ENCODE measurements at regions of chr17 and their contacts with region 1.

Region 1: DNA sequence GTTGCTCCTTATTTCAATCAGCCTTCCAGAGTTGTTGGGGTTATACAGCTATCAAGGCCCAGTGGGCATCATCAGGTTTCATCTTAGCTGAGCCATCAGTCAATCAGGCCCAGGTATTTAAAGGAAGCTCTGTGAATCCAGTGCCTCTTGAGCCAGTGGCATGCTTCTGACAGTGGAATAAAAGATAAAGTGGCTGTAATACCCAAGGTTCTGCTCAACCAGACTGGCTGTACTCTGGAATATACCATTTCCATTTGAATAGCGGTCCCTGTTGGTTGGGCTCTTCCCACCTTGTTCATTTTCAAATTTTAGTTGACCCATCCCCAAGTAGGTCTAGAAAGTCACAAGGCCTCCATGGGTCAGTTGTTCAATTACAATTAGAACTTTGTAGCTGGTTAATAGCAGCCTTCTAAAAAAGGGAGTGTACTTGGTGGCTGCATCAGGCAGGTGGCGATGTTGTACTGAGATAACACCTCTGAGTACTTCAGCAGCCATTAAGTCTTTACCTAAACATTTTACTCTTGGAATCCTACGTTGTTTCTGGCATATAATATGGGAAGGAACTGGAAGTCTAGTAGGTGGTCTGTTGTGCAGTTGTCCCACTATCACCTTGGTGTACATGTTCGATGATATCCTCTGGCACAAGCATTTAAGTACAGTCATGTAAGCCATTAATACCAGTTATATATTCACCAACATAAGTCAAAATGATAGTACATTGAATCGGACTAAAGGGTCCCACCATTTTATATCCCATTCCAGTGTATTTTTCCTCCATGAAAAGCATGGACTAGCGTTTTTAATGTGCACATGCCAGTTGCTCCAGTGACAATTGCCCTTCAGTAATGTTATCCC is 294.1 kb downstream of the BCAS3 start:
- DNase-seq: peak; percentile 11 to 48 (median 22)
- ATAC-seq: peak; percentile 74
- H3K4me3 ChIP-seq: no peak overlapping the region
- H3K27ac ChIP-seq: no peak overlapping the region
- H3K4me1 ChIP-seq: no peaks in the 10 kb centered on the region
- H3K27me3 ChIP-seq: no peaks in the 10 kb centered on the region
- CTCF ChIP-seq: peak; percentile 50 to 71 (median 68)
- EP300 ChIP-seq: no peak
- POLR2A ChIP-seq: no peak
- RAD21 ChIP-seq: peak; percentile 80 to 84

Region 2: DNA sequence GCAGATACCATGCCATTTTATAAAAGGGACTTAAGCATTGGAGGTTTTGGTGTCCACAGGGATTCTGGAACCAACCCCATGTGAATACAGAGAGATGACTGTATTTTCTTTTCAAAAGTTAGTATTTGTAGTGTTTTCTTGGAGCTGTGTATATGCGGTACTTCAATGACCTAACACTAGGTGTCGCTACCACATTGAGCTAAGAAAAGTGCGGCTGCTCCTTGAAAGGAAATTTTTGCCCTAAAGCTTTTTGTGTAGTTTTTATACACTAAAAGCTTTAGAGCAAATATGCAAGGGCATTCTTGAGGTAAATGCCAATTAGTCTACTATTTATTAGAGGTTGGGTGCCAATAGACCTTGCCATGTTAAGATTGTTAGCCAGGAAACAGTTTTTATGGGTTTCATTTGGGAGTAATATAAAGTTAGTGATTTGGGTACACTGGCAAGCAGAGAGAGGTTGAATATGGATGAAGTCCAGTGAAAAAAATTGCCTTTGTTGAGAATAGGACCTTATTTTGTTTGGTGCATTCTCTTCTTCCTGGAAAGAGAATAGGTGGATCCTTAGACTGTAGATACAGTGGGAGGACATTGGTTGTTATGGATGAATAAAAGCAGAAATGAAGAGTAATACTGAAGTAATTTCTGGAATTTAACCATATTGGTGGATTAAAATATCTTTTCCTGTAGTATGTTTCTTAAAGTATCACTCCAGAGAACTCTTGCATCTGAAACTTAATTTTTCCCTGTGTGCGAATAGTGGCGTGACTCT is 250.8 kb before region 1 on chr17:
- CTCF ChIA-PET with region 1: no interaction called
- POLR2A ChIA-PET with region 1: interaction called, 3 read pairs
- in situ Hi-C with region 1: no loop called
- intact Hi-C with region 1: loop called (anchors 10 kb)
- DNase-seq: peak; percentile 50 to 72 (median 58)
- ATAC-seq: peak; percentile 75
- H3K4me3 ChIP-seq: no peak overlapping the region
- H3K27ac ChIP-seq: no peak overlapping the region
- H3K4me1 ChIP-seq: no peaks in the 10 kb centered on the region
- H3K27me3 ChIP-seq: peaks cover 0 to 4% of the 10 kb centered on the region in 2 experiments; a peak in 3 of 5 replicates
- CTCF ChIP-seq: peak; percentile 60 to 88 (median 77)
- EP300 ChIP-seq: no peak
- POLR2A ChIP-seq: no peak
- RAD21 ChIP-seq: peak; percentile 82 to 91

Region 3: GRCh38 chr17:60832151-60832585 is 139.6 kb before region 1 on chr17:
- CTCF ChIA-PET with region 1: no interaction called
- POLR2A ChIA-PET with region 1: no interaction called
- in situ Hi-C with region 1: no loop called
- intact Hi-C with region 1: no loop called
- DNase-seq: no peak
- ATAC-seq: no peak
- H3K4me3 ChIP-seq: no peak overlapping the region
- H3K27ac ChIP-seq: no peak overlapping the region
- H3K4me1 ChIP-seq: no peaks in the 10 kb centered on the region
- H3K27me3 ChIP-seq: peaks cover 0 to 6% of the 10 kb centered on the region in 2 experiments; a peak in 1 of 5 replicates
- CTCF ChIP-seq: no peak
- EP300 ChIP-seq: no peak
- POLR2A ChIP-seq: no peak
- RAD21 ChIP-seq: no peak

Region 4: DNA sequence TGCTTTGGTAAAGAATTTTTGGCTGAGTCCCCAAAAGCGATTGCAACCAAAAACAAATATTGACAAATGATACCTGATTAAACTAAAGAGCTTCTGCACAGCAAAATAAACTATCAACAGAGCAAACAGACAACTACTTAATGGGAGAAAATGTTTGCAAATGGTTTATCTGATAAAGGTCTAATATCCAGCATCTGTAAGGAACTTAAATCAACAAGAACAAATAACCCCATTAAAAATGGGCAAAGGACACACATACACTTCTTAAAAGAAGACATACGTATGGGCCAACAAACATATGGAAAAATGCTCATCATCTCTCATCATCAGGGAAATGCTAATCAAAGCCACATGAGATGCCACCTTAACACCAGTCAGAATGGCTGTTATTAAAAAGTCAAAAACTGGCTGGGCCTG is 51.6 kb before region 1 on chr17:
- CTCF ChIA-PET with region 1: no interaction called
- POLR2A ChIA-PET with region 1: no interaction called
- in situ Hi-C with region 1: no loop called
- intact Hi-C with region 1: no loop called
- DNase-seq: no peak
- ATAC-seq: no peak
- H3K4me3 ChIP-seq: no peak overlapping the region
- H3K27ac ChIP-seq: no peak overlapping the region
- H3K4me1 ChIP-seq: no peaks in the 10 kb centered on the region
- H3K27me3 ChIP-seq: peaks cover 3 to 4% of the 10 kb centered on the region in 2 experiments; a peak in 2 of 5 replicates
- CTCF ChIP-seq: no peak
- EP300 ChIP-seq: no peak
- POLR2A ChIP-seq: no peak
- RAD21 ChIP-seq: no peak

Region 5: GRCh38 chr17:61551255-61551742 is 579.6 kb after region 1 on chr17:
- CTCF ChIA-PET with region 1: no interaction called
- POLR2A ChIA-PET with region 1: no interaction called
- in situ Hi-C with region 1: no loop called
- intact Hi-C with region 1: loop called (anchors 5 kb)
- DNase-seq: peak; percentile 10 to 38 (median 16)
- ATAC-seq: peak; percentile 60; the same call in 1 of the 3 replicates
- H3K4me3 ChIP-seq: no peak overlapping the region
- H3K27ac ChIP-seq: no peak overlapping the region
- H3K4me1 ChIP-seq: no peaks in the 10 kb centered on the region
- H3K27me3 ChIP-seq: peaks cover 8 to 11% of the 10 kb centered on the region in 2 experiments; a peak in 3 of 5 replicates
- CTCF ChIP-seq: peak; percentile 44 to 78 (median 49); a peak in 5 of 6 replicates
- EP300 ChIP-seq: no peak
- POLR2A ChIP-seq: no peak
- RAD21 ChIP-seq: peak; percentile 70 to 81

Measured in K562 (cell line).